Activated CD4-positive, alpha-beta T cell treated with anti-CD3 and anti-CD28 coated beads, Interleukin-2, amount 10 ng/mL, durations not matched to agents 7 days and 5 days (primary cell): ENCODE measurements at regions of chr6 and their contacts with region 1.

Region 1: DNA sequence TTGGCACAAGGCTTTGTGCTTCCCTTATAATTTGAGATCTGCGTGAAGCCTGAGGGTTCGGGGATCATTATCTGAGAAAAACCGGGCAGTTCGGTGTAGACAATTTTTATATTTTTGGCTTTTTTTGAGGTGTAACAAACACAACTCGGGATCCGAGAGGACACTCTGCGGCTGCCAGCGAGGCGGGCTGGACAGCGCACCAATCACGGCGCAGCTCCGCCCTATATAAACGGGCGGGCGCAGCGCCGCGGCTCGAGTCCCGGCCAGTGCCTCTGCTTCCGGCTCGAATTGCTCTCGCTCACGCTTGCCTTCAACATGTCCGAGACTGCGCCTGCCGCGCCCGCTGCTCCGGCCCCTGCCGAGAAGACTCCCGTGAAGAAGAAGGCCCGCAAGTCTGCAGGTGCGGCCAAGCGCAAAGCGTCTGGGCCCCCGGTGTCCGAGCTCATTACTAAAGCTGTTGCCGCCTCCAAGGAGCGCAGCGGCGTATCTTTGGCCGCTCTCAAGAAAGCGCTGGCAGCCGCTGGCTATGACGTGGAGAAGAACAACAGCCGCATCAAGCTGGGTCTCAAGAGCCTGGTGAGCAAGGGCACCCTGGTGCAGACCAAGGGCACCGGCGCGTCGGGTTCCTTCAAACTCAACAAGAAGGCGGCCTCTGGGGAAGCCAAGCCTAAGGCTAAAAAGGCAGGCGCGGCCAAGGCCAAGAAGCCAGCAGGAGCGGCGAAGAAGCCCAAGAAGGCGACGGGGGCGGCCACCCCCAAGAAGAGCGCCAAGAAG is 69.0 kb downstream of the HFE start:
- DNase-seq: peak; percentile 90
- H3K4me3 Mint-ChIP-seq: peak overlapping the region; percentile 92
- H3K27ac Mint-ChIP-seq: peak overlapping the region; percentile 97
- H3K4me1 Mint-ChIP-seq: peaks cover 39% of the 10 kb centered on the region
- H3K27me3 Mint-ChIP-seq: peaks cover 3% of the 10 kb centered on the region

Region 2: DNA sequence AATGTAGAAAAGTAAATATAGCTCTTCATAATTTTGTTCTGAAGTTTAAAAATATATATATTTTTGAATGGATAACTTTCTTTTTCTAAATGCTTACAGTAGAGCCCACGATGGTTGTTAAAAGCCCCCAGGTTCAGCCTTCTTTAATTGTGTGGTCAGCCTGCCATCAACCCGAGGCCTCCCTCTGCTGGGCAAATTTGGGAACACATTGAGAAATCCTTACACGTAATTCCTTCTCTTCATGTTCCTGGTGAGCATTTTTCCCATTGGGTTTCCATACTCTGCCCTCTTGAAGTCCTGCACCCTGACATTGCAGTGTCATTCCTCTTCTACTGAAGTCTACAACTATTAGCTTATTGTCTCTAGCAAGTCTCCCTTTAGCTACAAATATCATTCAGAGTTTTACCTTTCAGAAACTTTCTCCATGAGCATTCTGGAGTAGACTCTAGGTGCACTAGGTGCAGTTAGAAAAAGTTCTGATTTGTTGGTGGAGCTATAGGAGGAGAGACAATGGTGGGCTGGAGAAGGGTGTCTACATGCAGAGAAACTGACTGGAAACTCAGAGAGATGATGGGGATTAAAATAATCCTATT is 153.1 kb before region 1 on chr6:
- CTCF ChIA-PET with region 1: no interaction called
- POLR2A ChIA-PET with region 1: no interaction called
- DNase-seq: peak; percentile 55
- H3K4me3 Mint-ChIP-seq: no peak overlapping the region
- H3K27ac Mint-ChIP-seq: no peak overlapping the region
- H3K4me1 Mint-ChIP-seq: peaks cover 12% of the 10 kb centered on the region
- H3K27me3 Mint-ChIP-seq: no peaks in the 10 kb centered on the region

Region 3: DNA sequence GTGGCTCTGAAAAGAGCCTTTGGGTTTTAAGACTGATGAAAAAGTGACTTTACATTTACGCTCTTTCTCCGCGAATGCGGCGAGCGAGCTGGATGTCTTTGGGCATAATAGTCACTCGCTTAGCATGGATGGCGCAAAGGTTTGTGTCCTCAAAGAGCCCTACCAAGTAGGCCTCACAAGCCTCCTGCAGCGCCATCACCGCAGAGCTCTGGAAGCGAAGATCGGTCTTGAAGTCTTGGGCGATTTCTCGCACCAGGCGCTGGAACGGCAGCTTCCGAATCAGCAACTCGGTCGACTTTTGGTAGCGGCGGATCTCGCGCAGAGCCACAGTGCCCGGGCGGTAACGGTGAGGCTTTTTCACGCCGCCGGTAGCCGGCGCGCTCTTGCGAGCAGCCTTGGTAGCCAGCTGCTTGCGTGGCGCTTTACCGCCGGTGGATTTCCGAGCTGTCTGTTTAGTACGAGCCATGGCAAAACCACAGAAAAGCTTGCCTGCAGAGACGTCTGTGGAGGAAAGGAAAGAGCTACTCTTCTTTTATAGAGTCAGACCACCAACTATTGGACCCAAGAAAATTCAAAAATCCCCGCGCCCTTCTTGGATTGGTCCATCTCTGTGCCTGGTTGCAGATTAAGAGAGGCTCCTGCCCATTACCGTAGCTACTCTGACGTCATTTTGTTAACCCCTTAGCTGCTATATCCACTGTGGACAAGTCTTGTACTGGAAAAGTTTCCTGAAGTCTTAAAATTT is 124.5 kb before region 1 on chr6:
- CTCF ChIA-PET with region 1: no interaction called
- POLR2A ChIA-PET with region 1: interaction called, 45 read pairs
- DNase-seq: peak; percentile 96
- H3K4me3 Mint-ChIP-seq: peak overlapping the region; percentile 96
- H3K27ac Mint-ChIP-seq: peak overlapping the region; percentile 100
- H3K4me1 Mint-ChIP-seq: peaks cover 79% of the 10 kb centered on the region
- H3K27me3 Mint-ChIP-seq: peaks cover 3% of the 10 kb centered on the region

Region 4: DNA sequence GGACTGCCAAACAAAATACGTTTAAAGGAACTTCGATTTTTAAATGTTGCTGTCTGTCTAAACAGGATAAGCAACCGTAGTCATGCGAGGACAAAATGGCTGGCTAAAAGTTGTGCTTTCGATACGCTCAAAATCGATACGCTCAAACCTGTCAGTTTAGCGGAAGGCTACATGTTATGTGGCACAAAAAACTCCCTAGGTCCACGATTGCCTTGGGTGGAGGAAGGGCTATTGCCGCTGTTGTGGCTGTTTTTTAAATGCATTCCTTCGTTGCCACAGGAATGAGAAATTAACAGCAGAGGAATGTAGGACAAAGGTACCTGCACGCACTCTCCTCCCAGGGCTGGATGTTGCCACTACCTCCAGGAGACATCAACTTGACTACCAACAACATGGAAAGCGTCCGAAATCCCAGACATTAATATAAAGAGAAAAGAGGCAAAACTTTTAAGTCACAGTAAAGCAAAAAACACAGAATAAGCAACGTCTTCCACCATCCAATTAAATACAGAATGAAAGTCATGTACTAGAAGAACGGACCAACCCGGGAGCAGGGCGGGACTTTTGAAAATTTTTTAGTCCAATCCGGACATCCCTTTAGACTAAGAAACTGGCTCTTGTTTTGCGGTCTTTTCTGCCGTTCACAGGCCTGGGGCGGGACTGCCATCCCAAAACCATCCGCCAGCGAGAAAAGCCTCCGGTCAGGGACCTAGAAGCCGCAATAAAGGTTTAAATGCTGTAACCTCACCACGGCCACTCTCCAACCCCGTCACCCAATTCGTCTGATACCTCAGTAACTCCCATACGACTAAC is 101.2 kb before region 1 on chr6:
- CTCF ChIA-PET with region 1: no interaction called
- POLR2A ChIA-PET with region 1: interaction called, 18 read pairs
- DNase-seq: peak; percentile 94
- H3K4me3 Mint-ChIP-seq: peak overlapping the region; percentile 87
- H3K27ac Mint-ChIP-seq: peak overlapping the region; percentile 99
- H3K4me1 Mint-ChIP-seq: peaks cover 40% of the 10 kb centered on the region
- H3K27me3 Mint-ChIP-seq: no peaks in the 10 kb centered on the region

Region 5: GRCh38 chr6:26175428-26176181 is 19.3 kb after region 1 on chr6:
- CTCF ChIA-PET with region 1: interaction called, 11 read pairs
- POLR2A ChIA-PET with region 1: interaction called, 77 read pairs
- DNase-seq: peak; percentile 81
- H3K4me3 Mint-ChIP-seq: peak overlapping the region; percentile 54
- H3K27ac Mint-ChIP-seq: peak overlapping the region; percentile 75
- H3K4me1 Mint-ChIP-seq: peaks cover 50% of the 10 kb centered on the region
- H3K27me3 Mint-ChIP-seq: no peaks in the 10 kb centered on the region

Region 6: DNA sequence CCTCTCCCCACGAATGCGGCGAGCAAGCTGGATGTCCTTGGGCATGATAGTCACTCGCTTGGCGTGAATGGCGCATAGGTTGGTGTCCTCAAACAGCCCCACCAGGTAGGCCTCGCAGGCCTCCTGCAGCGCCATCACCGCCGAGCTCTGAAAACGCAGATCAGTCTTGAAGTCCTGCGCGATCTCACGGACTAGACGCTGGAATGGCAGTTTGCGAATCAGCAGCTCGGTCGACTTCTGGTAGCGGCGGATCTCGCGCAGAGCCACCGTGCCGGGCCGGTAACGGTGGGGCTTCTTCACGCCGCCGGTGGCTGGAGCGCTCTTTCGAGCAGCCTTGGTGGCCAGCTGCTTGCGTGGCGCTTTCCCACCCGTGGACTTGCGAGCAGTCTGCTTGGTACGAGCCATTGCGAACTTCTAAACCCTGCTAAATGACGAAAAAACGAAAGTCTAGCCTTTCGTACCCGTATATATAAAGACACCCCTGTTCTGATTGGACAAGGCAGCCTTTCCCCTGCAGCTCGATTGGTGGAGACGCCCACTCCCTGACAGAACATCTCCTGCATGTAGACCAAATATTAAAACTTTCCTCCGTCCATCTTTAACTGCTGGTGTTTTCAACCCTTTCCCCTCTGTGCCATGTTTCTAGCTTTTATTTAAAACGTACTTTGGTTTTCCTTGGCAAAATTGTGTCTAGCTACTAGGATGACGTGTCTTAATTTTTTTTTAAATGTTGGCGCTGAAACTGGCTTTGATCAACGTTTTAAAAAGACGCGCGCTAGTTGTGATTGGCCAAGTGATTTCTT is 40.8 kb after region 1 on chr6:
- CTCF ChIA-PET with region 1: interaction called, 12 read pairs
- POLR2A ChIA-PET with region 1: interaction called, 185 read pairs
- DNase-seq: peak; percentile 91
- H3K4me3 Mint-ChIP-seq: peak overlapping the region; percentile 99
- H3K27ac Mint-ChIP-seq: peak overlapping the region; percentile 98
- H3K4me1 Mint-ChIP-seq: peaks cover 44% of the 10 kb centered on the region
- H3K27me3 Mint-ChIP-seq: no peaks in the 10 kb centered on the region

Region 7: GRCh38 chr6:26270903-26271667 is 114.8 kb after region 1 on chr6:
- CTCF ChIA-PET with region 1: interaction called, 4 read pairs
- POLR2A ChIA-PET with region 1: interaction called, 10 read pairs
- DNase-seq: peak; percentile 91
- H3K4me3 Mint-ChIP-seq: no peak overlapping the region
- H3K27ac Mint-ChIP-seq: no peak overlapping the region
- H3K4me1 Mint-ChIP-seq: peaks cover 32% of the 10 kb centered on the region
- H3K27me3 Mint-ChIP-seq: no peaks in the 10 kb centered on the region

Region 8: DNA sequence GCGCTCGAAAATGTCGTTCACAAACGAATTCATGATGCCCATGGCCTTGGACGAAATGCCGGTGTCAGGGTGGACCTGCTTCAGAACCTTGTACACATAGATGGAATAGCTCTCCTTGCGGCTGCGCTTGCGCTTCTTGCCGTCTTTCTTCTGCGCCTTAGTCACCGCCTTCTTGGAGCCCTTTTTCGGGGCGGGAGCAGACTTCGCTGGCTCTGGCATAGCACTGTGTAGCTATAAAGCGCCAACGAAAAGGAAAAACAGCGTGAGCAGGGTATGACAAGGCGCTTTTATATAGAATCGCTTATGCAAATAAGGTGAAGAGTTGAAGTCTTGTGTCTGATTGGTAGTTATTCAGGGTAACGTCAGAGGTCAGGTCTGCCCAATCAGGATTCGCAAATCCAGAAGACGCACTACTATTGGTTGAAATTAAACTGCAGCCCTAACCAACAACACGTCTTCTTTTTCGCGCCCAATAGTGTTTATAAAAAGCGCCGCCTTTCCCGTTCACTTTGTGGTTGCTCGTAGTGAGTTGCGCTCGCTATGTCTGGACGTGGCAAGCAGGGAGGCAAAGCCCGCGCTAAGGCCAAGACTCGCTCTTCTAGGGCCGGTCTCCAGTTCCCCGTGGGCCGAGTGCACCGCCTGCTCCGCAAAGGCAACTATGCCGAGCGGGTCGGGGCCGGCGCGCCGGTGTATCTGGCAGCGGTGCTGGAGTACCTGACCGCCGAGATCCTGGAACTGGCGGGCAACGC is 976.4 kb after region 1 on chr6:
- CTCF ChIA-PET with region 1: no interaction called
- POLR2A ChIA-PET with region 1: interaction called, 12 read pairs
- DNase-seq: peak; percentile 94
- H3K4me3 Mint-ChIP-seq: no peak overlapping the region
- H3K27ac Mint-ChIP-seq: no peak overlapping the region
- H3K4me1 Mint-ChIP-seq: peaks cover 66% of the 10 kb centered on the region
- H3K27me3 Mint-ChIP-seq: no peaks in the 10 kb centered on the region